Activated CD4-positive, alpha-beta memory T cell treated with anti-CD3 and anti-CD28 coated beads for 36 hours (primary cell): ENCODE measurements at regions of chrX and their contacts with region 1.

Region 1: GRCh38 chrX:21940356-21940829 is at the start of gene SMS:
- DNase-seq: peak; percentile 72
- H3K4me3 Mint-ChIP-seq: peak within 1 kb of the TSS; percentile 84
- H3K27ac Mint-ChIP-seq: peak within 1 kb of the TSS; percentile 88
- H3K4me1 Mint-ChIP-seq: peaks cover 25% of the 10 kb centered on the region
- H3K27me3 Mint-ChIP-seq: no peaks in the 10 kb centered on the region
- total RNA-seq, gene SMS: 119 to 120 TPM

Region 2: GRCh38 chrX:21972721-21973120 is 32.3 kb after region 1 on chrX:
- CTCF ChIA-PET with region 1: no interaction called
- POLR2A ChIA-PET with region 1: interaction called, 5 read pairs
- intact Hi-C with region 1: loop called (anchors 2 kb)
- DNase-seq: peak; percentile 64
- H3K4me3 Mint-ChIP-seq: no peak overlapping the region
- H3K27ac Mint-ChIP-seq: peak overlapping the region; percentile 87
- H3K4me1 Mint-ChIP-seq: peaks cover 35% of the 10 kb centered on the region
- H3K27me3 Mint-ChIP-seq: no peaks in the 10 kb centered on the region